HCT116 (cell line): ENCODE measurements at regions of chr3 and their contacts with region 1.

Region 1: DNA sequence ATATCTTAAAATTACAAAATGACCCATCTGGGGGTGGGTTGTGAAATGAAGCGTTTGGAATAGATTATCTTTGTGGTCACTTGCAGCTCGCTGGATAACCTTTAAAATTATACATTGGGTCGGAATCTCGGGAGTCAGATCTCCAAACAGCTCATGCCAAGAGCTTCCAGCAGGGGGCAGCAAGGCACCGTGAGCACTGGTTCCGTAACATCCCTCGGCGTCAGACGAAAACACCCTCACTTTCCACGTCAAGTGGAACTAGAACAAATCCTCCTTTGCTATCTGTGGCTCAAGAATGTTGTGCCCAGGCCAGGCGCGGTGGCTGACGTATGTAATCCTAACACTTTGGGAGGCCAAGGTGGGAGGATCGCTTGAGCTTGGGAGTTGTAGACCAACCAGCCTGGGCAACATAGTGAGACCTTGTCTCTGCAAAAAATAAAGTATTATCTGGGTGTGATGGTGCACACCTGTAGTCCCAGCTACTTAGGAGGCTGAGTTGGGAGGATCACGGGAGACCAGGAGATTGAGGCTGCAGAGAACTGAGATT is 31.1 kb downstream of the UMPS start:
- DNase-seq: peak; percentile 56
- ATAC-seq: peak; percentile 87
- H3K4me3 ChIP-seq: 0 out of 4 replicates have a peak overlapping the region, but pooled peaks of 1 of the 2 experiments have one; percentile 6
- H3K27ac ChIP-seq: no peak overlapping the region
- H3K4me1 ChIP-seq: peaks cover 0 to 7% of the 10 kb centered on the region in 2 experiments; a peak in 1 of 4 replicates
- H3K27me3 ChIP-seq: no peaks in the 10 kb centered on the region
- CTCF ChIP-seq: peak; percentile 81 to 95 (median 93)
- POLR2A ChIP-seq: no peak
- RAD21 ChIP-seq: peak; percentile 94

Region 2: GRCh38 chr3:124032648-124033359 is 728.5 kb before region 1 on chr3:
- CTCF ChIA-PET with region 1: no interaction called
- POLR2A ChIA-PET with region 1: no interaction called
- RAD21 ChIA-PET with region 1: no interaction called
- intact Hi-C with region 1: no loop called
- DNase-seq: peak; percentile 28
- ATAC-seq: peak; percentile 98
- H3K4me3 ChIP-seq: peak overlapping the region; percentile 38 to 58
- H3K27ac ChIP-seq: peak overlapping the region; percentile 20; the same call in 1 of the 2 replicates
- H3K4me1 ChIP-seq: peaks cover 4 to 6% of the 10 kb centered on the region in 2 experiments; a peak in 2 of 4 replicates
- H3K27me3 ChIP-seq: peaks cover 46% of the 10 kb centered on the region
- CTCF ChIP-seq: peak in 2 of 3 experiments; percentile 48 to 63; a peak in 4 of 6 replicates
- POLR2A ChIP-seq: no peak
- RAD21 ChIP-seq: no peak

Region 3: DNA sequence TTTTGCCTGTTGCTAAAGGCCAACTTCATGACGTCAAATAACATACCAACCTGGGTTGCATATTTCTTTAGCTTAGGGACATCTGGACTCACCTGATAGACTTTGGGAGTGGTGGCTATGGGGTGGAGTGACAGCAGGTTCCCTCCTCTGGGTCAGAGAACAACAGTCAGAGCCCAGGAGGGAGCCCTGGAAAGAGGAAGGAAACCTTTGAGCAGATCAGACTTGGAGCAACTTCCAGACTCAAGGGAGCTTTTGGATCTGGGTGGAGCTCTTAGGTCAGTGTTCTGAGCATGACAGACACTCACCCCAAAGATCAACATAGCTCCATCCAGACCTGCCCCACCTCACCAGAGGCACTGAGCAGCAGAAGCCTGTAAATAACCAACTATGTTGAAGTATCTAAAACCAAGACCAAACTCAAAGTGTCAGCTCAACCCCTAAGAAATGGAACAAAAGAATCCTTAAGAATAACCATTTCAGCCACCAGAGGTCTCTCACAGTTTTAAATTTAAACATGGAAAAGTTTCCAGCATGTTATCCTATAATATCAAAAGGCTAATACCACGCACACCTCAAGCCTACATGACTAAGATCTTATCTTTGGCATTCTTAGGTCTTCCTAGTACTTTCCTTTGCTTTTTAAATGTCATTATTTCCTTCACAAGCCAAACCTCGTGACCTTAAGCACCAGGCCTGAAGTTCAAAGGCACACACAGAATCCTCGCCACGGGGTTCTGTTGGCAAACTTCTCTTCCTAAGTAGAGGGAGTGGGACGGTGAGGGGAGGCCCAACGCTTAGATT is 25.3 kb after region 1 on chr3:
- CTCF ChIA-PET with region 1: interaction called, 19 read pairs
- POLR2A ChIA-PET with region 1: no interaction called
- RAD21 ChIA-PET with region 1: no interaction called
- intact Hi-C with region 1: no loop called
- DNase-seq: peak; percentile 8
- ATAC-seq: peak; percentile 49
- H3K4me3 ChIP-seq: no peak overlapping the region
- H3K27ac ChIP-seq: peak overlapping the region; percentile 1; the same call in 1 of the 2 replicates
- H3K4me1 ChIP-seq: peaks cover 11% of the 10 kb centered on the region in 2 experiments; a peak in 3 of 4 replicates
- H3K27me3 ChIP-seq: no peaks in the 10 kb centered on the region
- CTCF ChIP-seq: peak; percentile 13 to 70 (median 63); a peak in 4 of 6 replicates
- POLR2A ChIP-seq: no peak
- RAD21 ChIP-seq: peak; percentile 83

Region 4: GRCh38 chr3:124905849-124906248 is 144.5 kb after region 1 on chr3:
- CTCF ChIA-PET with region 1: interaction called, 101 read pairs
- POLR2A ChIA-PET with region 1: interaction called, 5 read pairs
- RAD21 ChIA-PET with region 1: interaction called, 13 to 18 read pairs
- intact Hi-C with region 1: loop called (anchors 1 kb)
- DNase-seq: no peak
- ATAC-seq: peak; percentile 46
- H3K4me3 ChIP-seq: no peak overlapping the region
- H3K27ac ChIP-seq: no peak overlapping the region
- H3K4me1 ChIP-seq: peaks cover 0 to 8% of the 10 kb centered on the region in 2 experiments; a peak in 2 of 4 replicates
- H3K27me3 ChIP-seq: peaks cover 4% of the 10 kb centered on the region
- CTCF ChIP-seq: 0 out of 6 replicates have a peak, but pooled peaks have one; percentile 6 to 18 (median 10)
- POLR2A ChIP-seq: no peak
- RAD21 ChIP-seq: peak; percentile 26; the same call in 1 of the 2 replicates

Region 5: GRCh38 chr3:124928333-124929202 is 167.2 kb after region 1 on chr3:
- CTCF ChIA-PET with region 1: interaction called, 10 read pairs
- POLR2A ChIA-PET with region 1: no interaction called
- RAD21 ChIA-PET with region 1: no interaction called
- intact Hi-C with region 1: no loop called
- DNase-seq: peak; percentile 60
- ATAC-seq: peak; percentile 91
- H3K4me3 ChIP-seq: no peak overlapping the region
- H3K27ac ChIP-seq: no peak overlapping the region
- H3K4me1 ChIP-seq: peaks cover 0 to 3% of the 10 kb centered on the region in 2 experiments; a peak in 1 of 4 replicates
- H3K27me3 ChIP-seq: no peaks in the 10 kb centered on the region
- CTCF ChIP-seq: peak; percentile 73 to 84 (median 82); a peak in 5 of 6 replicates
- POLR2A ChIP-seq: no peak
- RAD21 ChIP-seq: peak; percentile 83

Region 6: DNA sequence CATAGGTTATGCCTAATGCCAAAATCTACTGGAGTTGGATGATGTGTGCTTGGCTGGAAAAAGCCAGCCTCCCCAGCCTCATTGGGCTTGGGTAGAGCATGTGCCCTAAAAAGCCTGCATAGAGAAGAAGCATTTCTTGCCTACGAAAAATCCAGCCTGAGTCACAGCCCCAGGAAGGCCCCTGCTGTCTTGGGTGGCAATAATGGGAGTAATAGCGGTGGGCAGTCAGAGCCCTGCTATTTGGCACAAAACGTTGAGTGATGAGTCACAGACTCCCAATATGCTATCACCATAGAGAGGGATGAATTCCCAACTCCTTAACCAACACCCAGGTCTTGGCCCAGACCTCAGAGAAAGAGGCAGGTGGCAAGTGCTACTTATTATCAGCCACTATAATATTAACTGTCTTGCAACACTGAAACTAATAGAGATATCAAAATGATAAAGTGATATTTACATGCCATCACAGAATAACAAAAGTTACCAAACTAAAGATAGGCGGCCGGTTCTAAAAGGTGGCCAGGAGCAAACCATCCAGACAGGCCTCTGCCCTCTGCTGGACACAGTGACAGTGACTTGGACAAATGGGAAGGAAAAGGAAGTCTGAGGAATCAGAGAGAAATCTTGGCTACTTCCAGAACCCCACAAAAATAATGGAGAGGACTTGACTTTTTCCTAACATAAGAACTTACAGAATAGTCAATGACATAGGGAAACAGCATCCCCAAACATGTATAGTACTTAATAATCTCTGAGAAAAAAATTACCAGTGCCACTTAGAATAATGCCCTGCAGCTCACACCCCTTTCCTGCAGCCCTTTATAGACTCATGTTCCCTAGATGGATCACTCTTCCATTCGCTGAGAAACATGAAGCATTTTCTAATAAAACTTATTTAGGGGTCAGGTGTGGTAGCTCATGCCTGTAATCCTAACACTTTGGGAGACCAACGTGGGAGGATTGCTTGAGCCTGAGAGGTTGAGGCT is 225.1 kb after region 1 on chr3:
- CTCF ChIA-PET with region 1: interaction called, 13 read pairs
- POLR2A ChIA-PET with region 1: no interaction called
- RAD21 ChIA-PET with region 1: no interaction called
- intact Hi-C with region 1: loop called (anchors 1 kb)
- DNase-seq: peak; percentile 91
- ATAC-seq: peak; percentile 92
- H3K4me3 ChIP-seq: peak overlapping the region in 1 of 2 experiments; percentile 12; a peak in 1 of 4 replicates
- H3K27ac ChIP-seq: peak overlapping the region; percentile 63
- H3K4me1 ChIP-seq: peaks cover 21 to 29% of the 10 kb centered on the region in 2 experiments
- H3K27me3 ChIP-seq: no peaks in the 10 kb centered on the region
- CTCF ChIP-seq: peak; percentile 75 to 84 (median 83); a peak in 5 of 6 replicates
- POLR2A ChIP-seq: no peak
- RAD21 ChIP-seq: peak; percentile 65

Region 7: DNA sequence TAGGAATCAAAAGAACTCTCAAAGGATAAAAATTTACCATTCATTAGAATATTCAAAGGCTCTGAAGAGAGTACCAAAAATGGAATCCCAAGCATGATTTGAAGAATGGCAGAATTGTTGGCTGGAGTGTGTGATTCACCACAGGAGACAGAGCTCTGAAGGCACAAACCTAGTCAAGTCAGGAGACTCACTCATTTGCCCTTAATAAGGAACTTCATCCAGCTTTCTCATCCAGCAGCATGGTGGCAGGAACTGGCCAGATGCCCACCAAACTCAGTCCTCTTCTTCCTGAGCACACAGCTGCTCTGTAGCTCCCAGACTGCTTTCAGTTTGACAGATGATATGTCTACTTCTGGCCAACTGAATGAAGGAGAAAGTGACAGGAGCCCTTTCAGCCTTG is 311.0 kb after region 1 on chr3:
- CTCF ChIA-PET with region 1: no interaction called
- POLR2A ChIA-PET with region 1: no interaction called
- RAD21 ChIA-PET with region 1: no interaction called
- intact Hi-C with region 1: no loop called
- DNase-seq: no peak
- ATAC-seq: no peak
- H3K4me3 ChIP-seq: no peak overlapping the region
- H3K27ac ChIP-seq: no peak overlapping the region
- H3K4me1 ChIP-seq: no peaks in the 10 kb centered on the region
- H3K27me3 ChIP-seq: no peaks in the 10 kb centered on the region
- CTCF ChIP-seq: no peak
- POLR2A ChIP-seq: no peak
- RAD21 ChIP-seq: no peak

Region 8: GRCh38 chr3:125437631-125438435 is 676.5 kb after region 1 on chr3:
- CTCF ChIA-PET with region 1: no interaction called
- POLR2A ChIA-PET with region 1: no interaction called
- RAD21 ChIA-PET with region 1: no interaction called
- intact Hi-C with region 1: loop called (anchors 5 kb)
- DNase-seq: peak; percentile 29
- ATAC-seq: peak; percentile 81
- H3K4me3 ChIP-seq: no peak overlapping the region
- H3K27ac ChIP-seq: no peak overlapping the region
- H3K4me1 ChIP-seq: no peaks in the 10 kb centered on the region
- H3K27me3 ChIP-seq: no peaks in the 10 kb centered on the region
- CTCF ChIP-seq: peak; percentile 83 to 97 (median 96)
- POLR2A ChIP-seq: no peak
- RAD21 ChIP-seq: peak; percentile 87

Region 9: GRCh38 chr3:125585595-125586223 is 824.4 kb after region 1 on chr3:
- CTCF ChIA-PET with region 1: interaction called, 5 read pairs
- POLR2A ChIA-PET with region 1: no interaction called
- RAD21 ChIA-PET with region 1: no interaction called
- intact Hi-C with region 1: loop called (anchors 5 kb)
- DNase-seq: peak; percentile 45
- ATAC-seq: peak; percentile 87
- H3K4me3 ChIP-seq: no peak overlapping the region
- H3K27ac ChIP-seq: no peak overlapping the region
- H3K4me1 ChIP-seq: no peaks in the 10 kb centered on the region
- H3K27me3 ChIP-seq: no peaks in the 10 kb centered on the region
- CTCF ChIP-seq: peak; percentile 71 to 92 (median 80); a peak in 5 of 6 replicates
- POLR2A ChIP-seq: no peak
- RAD21 ChIP-seq: peak; percentile 90